ENCODE measurements at regions of chr2 and their contacts with region 1.

Region 1: GRCh38 chr2:61470965-61471904 is at the start of gene USP34:
- DNase-seq: peak; percentile 97 to 99
- ATAC-seq: peak; percentile 98
- H3K4me3 ChIP-seq: peak within 1 kb of the TSS; percentile 91 to 97
- H3K27ac ChIP-seq: peak within 1 kb of the TSS; percentile 91 to 93
- H3K4me1 ChIP-seq: no peaks in the 10 kb centered on the region
- H3K27me3 ChIP-seq: no peaks in the 10 kb centered on the region
- total RNA-seq, gene USP34: 128 to 146 TPM

Region 2: GRCh38 chr2:61549546-61549945 is 78.3 kb after region 1 on chr2:
- intact Hi-C with region 1: no loop called
- DNase-seq: no peak
- ATAC-seq: no peak
- H3K4me3 ChIP-seq: no peak overlapping the region
- H3K27ac ChIP-seq: no peak overlapping the region
- H3K4me1 ChIP-seq: no peaks in the 10 kb centered on the region
- H3K27me3 ChIP-seq: peaks cover 0 to 1% of the 10 kb centered on the region in 2 donors

Region 3: DNA sequence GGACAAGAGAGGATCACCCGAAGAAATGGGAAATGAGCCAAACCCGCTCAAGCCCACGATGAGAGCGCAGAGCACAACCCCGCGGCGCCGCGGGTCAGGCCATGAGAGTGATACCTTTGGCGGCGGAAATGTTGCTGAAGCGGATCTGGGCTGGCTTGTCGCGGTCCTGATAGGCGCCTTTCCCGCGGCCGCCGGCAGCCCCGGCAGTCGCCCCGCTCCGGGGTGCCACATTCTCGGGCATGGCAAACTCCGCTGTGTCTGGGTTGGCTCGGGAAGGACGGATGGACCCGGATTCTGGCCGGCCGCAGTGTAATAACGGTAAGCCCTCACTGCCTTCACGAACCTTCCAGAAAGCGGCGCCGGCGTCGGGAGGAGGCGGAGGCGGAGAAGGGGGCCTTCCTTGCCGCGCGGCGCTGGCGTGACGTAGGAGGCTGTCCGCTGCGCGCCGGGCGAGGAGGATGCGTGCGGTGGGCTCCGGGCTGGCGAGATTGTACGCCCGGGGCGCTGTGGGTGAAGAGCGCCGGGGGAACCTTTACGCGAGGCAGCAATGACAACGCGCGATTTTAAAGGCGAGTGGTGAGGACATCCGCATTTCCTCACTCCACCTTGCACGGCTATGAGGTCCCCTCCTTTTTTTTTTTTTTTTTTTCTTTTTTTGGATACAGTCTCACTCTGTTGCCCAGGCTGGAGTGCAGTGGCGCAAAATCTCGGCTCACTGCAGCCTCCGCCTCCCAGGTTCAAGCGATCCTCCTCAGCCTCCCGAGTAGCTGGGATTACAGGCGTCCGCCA is 417.2 kb after region 1 on chr2 and contains the start of gene CCT4:
- intact Hi-C with region 1: loop called in 1 of 2 experiments (anchors 5 kb)
- DNase-seq: peak; percentile 92 to 96
- ATAC-seq: peak; percentile 99
- H3K4me3 ChIP-seq: peak within 1 kb of the TSS; percentile 82 to 92
- H3K27ac ChIP-seq: peak within 1 kb of the TSS; percentile 62 to 92
- H3K4me1 ChIP-seq: no peaks in the 10 kb centered on the region
- H3K27me3 ChIP-seq: no peaks in the 10 kb centered on the region
- total RNA-seq, gene CCT4: 78.8 to 99.1 TPM

Measured in aorta (tissue), 5 donors.